Endothelial cell of umbilical vein (primary cell): ENCODE measurements at regions of chr21 and their contacts with region 1.

Region 1: DNA sequence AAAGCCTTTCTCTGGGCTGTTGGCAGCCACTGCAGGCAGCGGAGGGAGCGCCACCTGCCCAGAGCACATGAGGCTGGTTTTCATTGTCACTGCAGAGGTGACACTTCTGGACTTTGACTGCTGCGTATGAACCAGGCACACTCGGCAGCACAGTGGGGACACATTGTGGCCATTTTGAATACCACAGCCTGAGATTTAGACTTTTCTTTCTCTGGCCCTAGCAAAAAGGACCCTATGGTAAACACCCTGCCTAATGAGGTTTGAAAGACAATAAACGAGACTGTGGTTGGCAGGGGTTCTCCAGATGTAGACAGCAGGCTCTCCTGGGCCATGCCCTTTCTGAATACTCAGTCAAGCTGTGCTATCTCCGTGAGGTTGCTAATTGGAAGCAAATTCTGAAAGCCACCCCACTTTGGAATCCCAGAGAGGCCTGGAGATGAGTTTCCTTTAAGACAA is 12.0 kb upstream of the KCNE2 start:
- DNase-seq: peak; percentile 39
- H3K4me3 ChIP-seq: no peak overlapping the region
- H3K27ac ChIP-seq: no peak overlapping the region
- H3K4me1 ChIP-seq: no peaks in the 10 kb centered on the region
- H3K27me3 ChIP-seq: peaks cover 12 to 17% of the 10 kb centered on the region in 2 experiments
- CTCF ChIP-seq: peak; percentile 35 to 55
- POLR2A ChIP-seq: no peak

Region 2: DNA sequence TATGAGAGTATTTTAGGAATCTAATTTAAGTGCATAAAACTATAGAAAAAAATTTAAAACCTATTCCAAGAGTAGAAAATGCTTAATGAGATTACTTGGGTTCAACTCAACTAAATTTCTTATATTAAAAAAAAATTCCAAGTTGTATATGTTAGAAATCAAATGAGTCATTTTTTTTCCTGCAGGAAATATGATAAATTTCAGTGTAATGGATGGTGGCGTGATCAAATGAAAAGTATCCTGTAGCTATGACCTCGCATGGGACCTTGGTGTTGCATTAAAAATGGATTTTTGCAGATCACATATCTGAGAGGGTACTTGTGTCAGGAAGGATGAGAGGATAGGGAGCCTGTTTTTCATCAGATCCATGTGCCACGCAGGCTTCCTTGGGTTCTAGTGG is 454.1 kb before region 1 on chr21:
- CTCF ChIA-PET with region 1: no interaction called
- POLR2A ChIA-PET with region 1: no interaction called
- dilution Hi-C with region 1: no loop called
- intact Hi-C with region 1: no loop called
- DNase-seq: peak; percentile 57
- H3K4me3 ChIP-seq: no peak overlapping the region
- H3K27ac ChIP-seq: peak overlapping the region; percentile 52
- H3K4me1 ChIP-seq: peaks cover 30% of the 10 kb centered on the region
- H3K27me3 ChIP-seq: no peaks in the 10 kb centered on the region
- CTCF ChIP-seq: no peak
- POLR2A ChIP-seq: no peak

Region 3: GRCh38 chr21:33931799-33932390 is 419.9 kb before region 1 on chr21:
- CTCF ChIA-PET with region 1: interaction called, 10 read pairs
- POLR2A ChIA-PET with region 1: no interaction called
- dilution Hi-C with region 1: no loop called
- intact Hi-C with region 1: no loop called
- DNase-seq: peak; percentile 47
- H3K4me3 ChIP-seq: peak overlapping the region; percentile 18 to 70 (median 32)
- H3K27ac ChIP-seq: no peak overlapping the region
- H3K4me1 ChIP-seq: peaks cover 4% of the 10 kb centered on the region
- H3K27me3 ChIP-seq: no peaks in the 10 kb centered on the region
- CTCF ChIP-seq: no peak
- POLR2A ChIP-seq: no peak

Region 4: DNA sequence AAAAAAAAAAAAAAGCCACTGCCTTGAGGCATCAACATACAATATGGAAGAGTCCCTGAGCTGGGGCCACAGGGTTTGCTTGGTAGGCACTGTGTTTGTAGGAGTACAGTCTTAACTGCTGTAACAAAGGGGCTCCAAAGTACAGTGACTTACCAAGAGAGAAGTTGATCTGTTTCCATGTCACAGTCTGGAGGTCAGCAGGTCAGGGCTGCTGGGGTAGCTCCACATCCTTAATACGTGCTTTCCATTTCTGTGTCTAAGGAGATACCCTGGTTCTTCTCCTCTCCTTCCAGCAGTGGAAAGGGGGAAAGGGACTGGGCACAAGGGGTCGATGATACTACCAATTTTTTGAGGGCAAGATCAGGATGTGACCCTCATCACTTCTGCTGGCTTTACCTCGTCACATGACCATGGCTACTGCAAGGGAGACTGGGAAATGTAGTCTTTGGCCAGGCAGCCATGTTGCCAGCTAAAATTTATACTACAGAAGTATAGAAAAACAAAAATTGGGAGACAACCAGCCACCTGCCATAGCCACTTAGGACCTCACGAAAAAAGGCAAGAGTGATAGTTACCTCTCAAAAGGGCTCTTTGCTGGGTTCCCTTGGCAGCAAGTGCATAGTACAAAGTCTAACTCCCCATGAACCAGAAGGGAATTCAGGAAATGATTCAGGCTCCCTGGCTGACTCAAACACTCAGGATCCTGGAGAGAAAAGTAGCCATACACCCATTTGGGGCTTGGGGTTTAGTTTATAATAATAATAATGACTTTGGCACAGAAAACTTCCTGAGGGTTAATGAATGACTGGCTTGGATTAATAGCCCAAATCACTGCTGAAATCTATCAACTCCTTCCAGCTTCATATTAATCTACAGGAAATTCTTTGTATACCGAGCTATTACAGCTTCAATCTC is 383.5 kb before region 1 on chr21:
- CTCF ChIA-PET with region 1: interaction called, 11 read pairs
- POLR2A ChIA-PET with region 1: no interaction called
- dilution Hi-C with region 1: no loop called
- intact Hi-C with region 1: no loop called
- DNase-seq: peak; percentile 97
- H3K4me3 ChIP-seq: peak overlapping the region in 1 of 3 experiments; percentile 10
- H3K27ac ChIP-seq: peak overlapping the region; percentile 84
- H3K4me1 ChIP-seq: peaks cover 36% of the 10 kb centered on the region
- H3K27me3 ChIP-seq: peaks cover 0 to 3% of the 10 kb centered on the region in 2 experiments
- CTCF ChIP-seq: no peak
- POLR2A ChIP-seq: no peak

Region 5: GRCh38 chr21:34091607-34092006 is 260.2 kb before region 1 on chr21:
- CTCF ChIA-PET with region 1: interaction called, 12 read pairs
- POLR2A ChIA-PET with region 1: no interaction called
- dilution Hi-C with region 1: no loop called
- intact Hi-C with region 1: no loop called
- DNase-seq: peak; percentile 16
- H3K4me3 ChIP-seq: no peak overlapping the region
- H3K27ac ChIP-seq: no peak overlapping the region
- H3K4me1 ChIP-seq: peaks cover 16% of the 10 kb centered on the region
- H3K27me3 ChIP-seq: no peaks in the 10 kb centered on the region
- CTCF ChIP-seq: peak; percentile 20 to 27
- POLR2A ChIP-seq: no peak

Region 6: DNA sequence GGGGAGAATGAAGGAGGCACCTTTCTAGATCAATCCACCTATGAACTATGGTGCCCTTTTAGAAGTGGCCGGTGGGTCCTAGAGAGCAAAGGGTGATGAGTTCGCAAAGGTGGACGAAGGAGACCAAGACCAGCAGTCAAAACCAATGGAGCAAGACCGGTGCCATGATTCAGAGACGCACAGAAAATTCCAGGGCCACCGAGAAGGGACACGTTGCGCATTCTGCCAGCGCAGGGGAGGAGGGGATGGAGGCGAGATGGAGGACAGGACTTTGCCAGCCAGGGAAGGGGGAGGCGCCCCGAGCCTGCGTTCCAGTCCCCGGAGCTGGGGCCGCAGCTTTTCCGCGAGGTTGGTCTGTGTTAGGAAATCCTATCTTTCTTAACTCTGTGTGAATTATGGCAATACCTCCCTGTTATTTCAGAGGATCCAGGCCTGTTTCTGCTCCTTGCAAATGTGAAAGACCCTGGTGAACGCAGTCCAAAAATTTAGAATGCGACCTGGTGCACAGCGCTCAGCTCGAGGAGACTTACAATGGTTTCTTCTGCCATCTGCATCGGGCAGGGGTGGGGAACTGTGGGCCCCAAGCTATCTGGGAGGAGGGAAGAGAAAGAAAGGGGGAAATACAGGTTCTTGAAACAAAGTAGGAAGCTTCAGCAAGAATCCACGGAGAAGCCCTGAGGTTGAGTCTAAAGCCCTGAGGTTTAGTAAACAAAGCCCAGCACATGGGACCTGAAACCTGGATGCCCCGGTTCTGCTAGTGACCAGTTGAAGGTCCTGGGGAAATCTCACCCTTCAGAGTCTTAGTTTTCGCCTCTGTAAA is 149.1 kb before region 1 on chr21:
- CTCF ChIA-PET with region 1: interaction called, 30 read pairs
- POLR2A ChIA-PET with region 1: no interaction called
- dilution Hi-C with region 1: no loop called
- intact Hi-C with region 1: no loop called
- DNase-seq: no peak
- H3K4me3 ChIP-seq: peak overlapping the region in 1 of 3 experiments; percentile 46
- H3K27ac ChIP-seq: no peak overlapping the region
- H3K4me1 ChIP-seq: peaks cover 6% of the 10 kb centered on the region
- H3K27me3 ChIP-seq: peaks cover 0 to 7% of the 10 kb centered on the region in 2 experiments
- CTCF ChIP-seq: no peak
- POLR2A ChIP-seq: no peak

Region 7: GRCh38 chr21:34313116-34313515 is 38.7 kb before region 1 on chr21:
- CTCF ChIA-PET with region 1: interaction called, 12 read pairs
- POLR2A ChIA-PET with region 1: no interaction called
- dilution Hi-C with region 1: no loop called
- intact Hi-C with region 1: no loop called
- DNase-seq: peak; percentile 10
- H3K4me3 ChIP-seq: no peak overlapping the region
- H3K27ac ChIP-seq: no peak overlapping the region
- H3K4me1 ChIP-seq: peaks cover 14% of the 10 kb centered on the region
- H3K27me3 ChIP-seq: peaks cover 3 to 5% of the 10 kb centered on the region in 2 experiments
- CTCF ChIP-seq: no peak
- POLR2A ChIP-seq: no peak

Region 8: DNA sequence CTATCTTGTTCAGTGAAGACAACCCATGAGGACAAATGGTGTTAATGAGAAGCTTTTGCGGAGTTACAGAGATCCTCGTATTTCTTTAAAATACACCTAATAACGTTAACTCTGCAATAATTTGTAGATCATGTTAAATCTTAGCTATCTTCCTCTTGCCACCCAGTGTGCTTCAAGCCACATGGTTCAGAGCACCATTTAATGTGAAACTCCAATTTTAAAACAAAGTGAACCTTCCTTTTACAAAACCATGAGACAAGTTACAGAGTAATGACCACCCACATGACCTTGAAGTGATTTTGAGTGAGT is 10.3 kb after region 1 on chr21:
- CTCF ChIA-PET with region 1: interaction called, 25 read pairs
- POLR2A ChIA-PET with region 1: no interaction called
- dilution Hi-C with region 1: no loop called
- intact Hi-C with region 1: no loop called
- DNase-seq: no peak
- H3K4me3 ChIP-seq: no peak overlapping the region
- H3K27ac ChIP-seq: no peak overlapping the region
- H3K4me1 ChIP-seq: no peaks in the 10 kb centered on the region
- H3K27me3 ChIP-seq: peaks cover 8 to 17% of the 10 kb centered on the region in 2 experiments
- CTCF ChIP-seq: no peak
- POLR2A ChIP-seq: no peak